ENCODE measurements at regions of chr15 and their contacts with region 1.

Region 1: GRCh38 chr15:60358935-60359682 is 38.7 kb downstream of the ANXA2 start:
- DNase-seq: no peak
- H3K4me3 ChIP-seq: no peak overlapping the region
- H3K27ac ChIP-seq: no peak overlapping the region
- H3K4me1 ChIP-seq: no peaks in the 10 kb centered on the region
- CTCF ChIP-seq: no peak

Region 2: GRCh38 chr15:60264566-60264965 is 94.5 kb before region 1 on chr15:
- CTCF ChIA-PET with region 1: no interaction called
- POLR2A ChIA-PET with region 1: no interaction called
- intact Hi-C with region 1: no loop called
- DNase-seq: no peak
- H3K4me3 ChIP-seq: no peak overlapping the region
- H3K27ac ChIP-seq: no peak overlapping the region
- H3K4me1 ChIP-seq: no peaks in the 10 kb centered on the region
- CTCF ChIP-seq: no peak

Region 3: DNA sequence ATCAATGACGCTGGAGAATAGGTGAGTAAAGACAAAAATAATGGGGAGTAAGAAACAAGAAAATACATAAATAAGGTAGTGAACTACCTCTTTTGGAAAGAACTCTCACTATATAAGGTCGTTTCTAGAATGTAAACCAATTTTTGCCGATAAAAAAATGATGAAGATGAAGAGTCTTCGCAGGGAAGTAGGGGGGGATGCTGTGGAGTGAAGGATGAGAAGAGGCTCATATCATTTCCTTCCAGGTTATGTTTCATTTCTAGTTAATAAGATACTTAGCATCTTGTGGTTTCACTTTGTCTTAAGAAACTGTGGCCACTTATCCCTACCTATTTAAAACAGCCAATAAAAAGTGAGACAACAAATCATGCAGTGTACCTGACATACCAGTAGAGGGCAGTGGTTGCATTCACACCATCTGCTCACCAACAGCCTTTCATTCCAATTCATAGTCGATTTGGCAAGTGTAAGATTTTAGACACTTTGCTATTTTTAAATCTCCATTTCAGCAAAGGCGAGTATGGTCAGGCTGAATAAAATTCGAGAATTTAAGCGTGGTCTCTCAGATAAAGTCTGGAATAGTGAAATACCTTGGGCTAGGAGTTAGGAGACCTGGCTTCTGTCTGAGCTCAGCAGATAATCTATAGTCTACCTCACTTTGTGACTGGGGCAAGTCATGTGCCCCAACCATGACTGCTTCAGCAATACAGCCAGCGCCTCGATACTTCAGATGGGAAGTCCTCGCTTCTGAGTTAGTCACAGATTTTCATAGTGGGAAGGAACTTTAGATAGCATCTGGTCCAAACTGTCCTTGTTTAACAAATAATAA is 148.7 kb after region 1 on chr15:
- CTCF ChIA-PET with region 1: no interaction called
- POLR2A ChIA-PET with region 1: no interaction called
- intact Hi-C with region 1: loop called (anchors 5 kb)
- DNase-seq: peak; percentile 64
- H3K4me3 ChIP-seq: no peak overlapping the region
- H3K27ac ChIP-seq: no peak overlapping the region
- H3K4me1 ChIP-seq: peaks cover 6% of the 10 kb centered on the region
- CTCF ChIP-seq: peak; percentile 98

Region 4: DNA sequence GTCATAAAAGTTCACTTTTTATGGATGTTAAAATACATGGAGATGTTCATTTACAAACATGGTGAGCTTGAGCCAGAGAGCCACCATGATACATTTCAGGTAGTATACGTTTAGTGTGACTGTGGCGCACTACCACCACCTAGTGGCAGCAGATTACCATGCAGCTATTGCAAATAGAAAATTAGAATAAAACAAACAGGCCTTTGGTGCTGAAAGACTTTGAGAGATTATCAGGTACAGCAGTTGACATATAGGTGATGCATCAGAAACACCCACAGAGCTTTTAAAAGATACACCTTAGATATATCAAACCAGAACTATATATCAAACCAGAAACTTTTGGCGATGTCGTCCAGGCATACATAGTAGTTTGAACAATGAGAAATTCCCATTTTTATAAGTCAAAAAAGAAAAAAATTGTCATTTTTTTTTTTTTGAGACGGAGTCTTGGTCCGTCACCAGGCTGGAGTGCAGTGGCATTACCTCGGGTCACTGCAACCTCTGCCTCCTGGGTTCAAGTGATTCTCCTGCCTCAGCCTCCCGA is 161.8 kb after region 1 on chr15:
- CTCF ChIA-PET with region 1: interaction called, 3 read pairs
- POLR2A ChIA-PET with region 1: interaction called, 4 read pairs
- intact Hi-C with region 1: loop called (anchors 1 kb)
- DNase-seq: peak; percentile 73
- H3K4me3 ChIP-seq: no peak overlapping the region
- H3K27ac ChIP-seq: no peak overlapping the region
- H3K4me1 ChIP-seq: no peaks in the 10 kb centered on the region
- CTCF ChIP-seq: peak; percentile 98

Region 5: GRCh38 chr15:60916679-60917460 is 557.8 kb after region 1 on chr15:
- CTCF ChIA-PET with region 1: no interaction called
- POLR2A ChIA-PET with region 1: no interaction called
- intact Hi-C with region 1: loop called (anchors 5 kb)
- DNase-seq: peak; percentile 82
- H3K4me3 ChIP-seq: no peak overlapping the region
- H3K27ac ChIP-seq: no peak overlapping the region
- H3K4me1 ChIP-seq: peaks cover 7% of the 10 kb centered on the region
- CTCF ChIP-seq: peak; percentile 92